Activated CD4-positive, alpha-beta memory T cell treated with anti-CD3 and anti-CD28 coated beads for 36 hours (primary cell): ENCODE measurements at regions of chr7 and their contacts with region 1.

Region 1: DNA sequence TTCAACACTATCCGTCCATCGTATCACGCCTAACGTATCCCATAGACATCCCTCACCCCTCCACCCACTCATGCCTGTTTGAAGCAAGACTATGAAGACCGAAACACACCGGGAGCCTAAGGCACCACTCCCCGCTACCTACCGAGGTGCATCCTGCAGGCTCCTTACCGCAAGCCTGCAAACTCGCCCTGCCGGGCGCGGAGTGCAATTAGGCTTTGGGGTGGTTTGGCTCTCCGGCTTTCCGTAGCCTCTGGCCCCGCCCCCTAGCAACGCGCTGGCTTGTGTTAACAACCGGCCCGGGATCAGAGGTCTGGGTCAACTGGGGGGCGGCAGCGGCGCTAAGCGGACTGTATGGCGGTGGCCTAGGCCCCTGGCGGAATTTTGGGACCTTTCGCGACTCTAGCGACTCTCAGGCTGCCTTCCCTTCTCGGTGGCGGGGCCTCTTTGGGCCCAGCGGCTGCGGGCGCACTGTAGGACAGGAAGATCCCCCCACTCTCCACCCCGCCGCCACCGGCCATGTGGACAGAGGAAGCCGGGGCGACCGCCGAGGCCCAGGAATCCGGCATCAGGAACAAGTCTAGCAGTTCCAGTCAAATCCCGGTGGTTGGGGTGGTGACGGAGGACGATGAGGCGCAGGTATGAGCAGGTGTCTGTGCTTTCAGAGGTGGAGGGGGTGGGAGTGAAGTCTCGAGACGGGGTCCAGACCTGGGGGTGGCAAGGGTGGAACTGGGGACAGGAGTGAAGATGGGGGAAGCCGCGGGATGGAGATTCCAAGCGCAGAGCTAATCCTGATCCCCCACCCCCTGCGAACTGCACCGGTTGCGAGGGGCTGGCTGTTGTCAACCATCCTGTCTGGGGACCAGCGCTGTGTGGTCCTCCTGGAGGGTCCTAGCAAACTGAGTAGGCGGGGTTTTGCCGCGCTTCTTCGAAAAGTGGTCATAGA is at the start of gene CFAP69:
- DNase-seq: peak; percentile 90
- H3K4me3 Mint-ChIP-seq: peak within 1 kb of the TSS; percentile 83
- H3K27ac Mint-ChIP-seq: peak within 1 kb of the TSS; percentile 13
- H3K4me1 Mint-ChIP-seq: peaks cover 18% of the 10 kb centered on the region
- H3K27me3 Mint-ChIP-seq: peaks cover 23% of the 10 kb centered on the region
- total RNA-seq, gene CFAP69: 0.48 TPM in 1 of 2 experiments, not detected in the other

Region 2: GRCh38 chr7:90178679-90179278 is 66.4 kb before region 1 on chr7:
- CTCF ChIA-PET with region 1: no interaction called
- POLR2A ChIA-PET with region 1: no interaction called
- intact Hi-C with region 1: loop called (anchors 5 kb)
- DNase-seq: peak; percentile 27
- H3K4me3 Mint-ChIP-seq: no peak overlapping the region
- H3K27ac Mint-ChIP-seq: peak overlapping the region; percentile 68
- H3K4me1 Mint-ChIP-seq: peaks cover 17% of the 10 kb centered on the region
- H3K27me3 Mint-ChIP-seq: peaks cover 2% of the 10 kb centered on the region

Region 3: DNA sequence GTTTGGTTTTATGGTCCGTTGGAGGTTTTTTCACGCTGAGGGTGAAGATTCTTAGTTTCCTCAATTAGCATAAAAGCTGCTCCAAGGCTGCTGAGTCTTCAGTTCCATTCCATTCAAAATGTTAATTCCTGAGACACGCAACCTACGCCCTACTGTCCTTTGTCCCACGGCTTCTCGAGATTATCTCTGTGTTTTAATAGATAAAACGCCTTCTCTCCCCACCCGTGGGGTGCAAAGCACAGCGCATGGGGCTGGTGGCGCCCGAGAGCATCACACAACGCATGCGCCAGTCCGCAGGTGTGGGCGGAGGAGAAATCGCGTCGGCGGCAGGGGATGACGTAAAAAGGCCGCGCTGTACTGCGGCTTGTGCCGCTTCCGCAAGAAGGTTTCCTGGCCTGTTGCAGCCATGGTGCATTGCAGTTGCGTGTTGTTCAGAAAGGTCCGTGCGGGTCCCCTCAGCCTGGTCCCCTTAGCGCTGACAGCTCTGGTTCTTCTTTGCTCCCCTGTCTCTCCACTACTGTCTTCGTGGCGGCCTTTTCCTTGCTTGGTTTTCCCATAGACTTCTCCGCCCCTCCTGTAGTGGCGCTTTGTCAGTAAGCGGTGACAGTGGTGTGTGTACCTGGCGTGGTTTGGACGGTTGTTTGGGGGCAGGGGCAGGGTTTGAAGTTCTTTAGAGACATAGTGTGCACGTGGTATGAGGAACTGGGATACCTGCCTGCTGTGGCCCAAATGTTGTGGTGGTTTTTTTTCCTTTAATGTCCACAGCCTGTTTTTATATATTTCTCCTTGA is 101.4 kb after region 1 on chr7 and contains the start of gene GTPBP10:
- CTCF ChIA-PET with region 1: interaction called, 3 read pairs
- POLR2A ChIA-PET with region 1: no interaction called
- intact Hi-C with region 1: loop called (anchors 1 kb)
- DNase-seq: peak; percentile 97
- H3K4me3 Mint-ChIP-seq: peak within 1 kb of the TSS; percentile 94
- H3K27ac Mint-ChIP-seq: peak within 1 kb of the TSS; percentile 93
- H3K4me1 Mint-ChIP-seq: peaks cover 40% of the 10 kb centered on the region
- H3K27me3 Mint-ChIP-seq: no peaks in the 10 kb centered on the region
- total RNA-seq, gene GTPBP10: 32.9 to 33.2 TPM

Region 4: GRCh38 chr7:90403174-90404113 is 158.3 kb after region 1 on chr7 and contains the start of gene CLDN12:
- CTCF ChIA-PET with region 1: no interaction called
- POLR2A ChIA-PET with region 1: no interaction called
- intact Hi-C with region 1: loop called (anchors 1 kb)
- DNase-seq: peak; percentile 89
- H3K4me3 Mint-ChIP-seq: peak within 1 kb of the TSS; percentile 84
- H3K27ac Mint-ChIP-seq: peak within 1 kb of the TSS; percentile 80
- H3K4me1 Mint-ChIP-seq: peaks cover 11% of the 10 kb centered on the region
- H3K27me3 Mint-ChIP-seq: no peaks in the 10 kb centered on the region
- total RNA-seq, gene CLDN12: 6.9 to 8.3 TPM